ENCODE measurements at regions of chr16 and their contacts with region 1.

Region 1: DNA sequence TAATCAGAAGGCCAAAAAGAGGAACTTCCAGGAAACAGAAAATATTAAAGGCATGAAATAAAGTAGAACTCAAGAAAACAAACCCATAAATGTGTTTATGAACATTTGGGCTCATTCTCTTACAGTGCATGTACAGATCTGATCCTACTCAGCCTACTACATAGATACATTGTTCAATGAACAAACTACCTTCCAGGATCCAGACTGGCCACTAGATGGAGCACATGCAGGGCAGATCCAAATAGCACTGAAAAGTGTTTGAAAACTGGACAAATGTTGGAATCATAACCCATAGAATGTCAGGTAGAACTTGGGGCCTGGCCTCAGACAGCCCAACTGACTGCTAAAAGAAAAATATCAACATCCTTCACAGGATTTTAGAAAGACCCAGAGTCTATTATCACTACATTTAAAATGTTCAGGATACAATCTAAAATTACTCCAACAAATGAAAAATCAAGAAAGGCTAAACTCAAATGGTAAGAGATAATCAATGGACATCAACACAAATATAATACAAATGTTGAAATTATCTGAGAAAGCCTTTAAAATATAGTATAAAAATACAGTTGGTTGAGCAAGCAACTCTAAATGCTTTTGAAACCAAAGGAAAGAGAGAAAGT is 122.4 kb upstream of the NUDT7 start:
- DNase-seq: peak; percentile 27
- H3K4me3 Mint-ChIP-seq: no peak overlapping the region
- H3K27ac Mint-ChIP-seq: no peak overlapping the region
- H3K4me1 Mint-ChIP-seq: no peaks in the 10 kb centered on the region
- H3K27me3 Mint-ChIP-seq: peaks cover 12% of the 10 kb centered on the region

Region 2: DNA sequence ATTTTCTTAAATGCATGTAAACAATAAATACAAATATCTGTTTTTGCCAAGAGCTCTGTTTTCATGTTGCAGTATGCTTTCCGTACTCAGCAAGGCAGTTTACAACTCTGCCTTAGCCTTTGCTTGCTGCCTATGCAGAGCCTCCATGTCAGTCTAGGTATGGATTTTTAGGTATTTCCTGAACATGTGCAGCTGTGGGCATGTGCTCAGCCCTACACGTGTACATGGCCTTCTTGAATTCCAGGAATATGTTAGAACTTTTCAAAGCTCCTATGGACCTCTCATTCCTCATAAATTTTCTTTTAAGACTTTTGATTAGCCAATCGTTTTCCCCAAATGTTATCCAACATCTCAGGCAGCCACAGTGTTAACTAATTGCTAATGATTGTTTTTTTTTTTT is 336.9 kb before region 1 on chr16:
- CTCF ChIA-PET with region 1: no interaction called
- POLR2A ChIA-PET with region 1: interaction called, 10 read pairs
- DNase-seq: no peak
- H3K4me3 Mint-ChIP-seq: no peak overlapping the region
- H3K27ac Mint-ChIP-seq: no peak overlapping the region
- H3K4me1 Mint-ChIP-seq: no peaks in the 10 kb centered on the region
- H3K27me3 Mint-ChIP-seq: peaks cover 13% of the 10 kb centered on the region

Region 3: DNA sequence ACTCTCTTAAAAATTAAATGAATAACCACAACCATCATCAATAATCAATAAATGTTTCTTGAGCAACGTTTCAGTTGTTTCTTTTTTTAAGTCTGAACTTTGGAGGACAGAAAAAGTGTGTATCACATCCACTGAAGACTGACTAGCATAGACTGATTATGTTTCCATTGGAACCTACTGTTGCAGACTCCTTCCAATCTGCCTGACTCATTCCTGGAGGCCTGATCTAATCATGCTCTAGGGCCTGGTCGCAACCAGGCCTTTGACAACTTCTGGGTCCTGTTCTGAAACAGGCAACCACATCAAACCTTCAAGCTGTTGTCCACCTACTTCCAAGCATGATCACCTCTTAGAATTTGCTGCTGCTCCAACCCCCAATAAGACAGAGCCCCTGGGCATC is 13.2 kb after region 1 on chr16:
- CTCF ChIA-PET with region 1: no interaction called
- POLR2A ChIA-PET with region 1: no interaction called
- DNase-seq: no peak
- H3K4me3 Mint-ChIP-seq: no peak overlapping the region
- H3K27ac Mint-ChIP-seq: no peak overlapping the region
- H3K4me1 Mint-ChIP-seq: no peaks in the 10 kb centered on the region
- H3K27me3 Mint-ChIP-seq: peaks cover 1% of the 10 kb centered on the region

Region 4: GRCh38 chr16:77696149-77696548 is 96.2 kb after region 1 on chr16:
- CTCF ChIA-PET with region 1: no interaction called
- POLR2A ChIA-PET with region 1: no interaction called
- DNase-seq: no peak
- H3K4me3 Mint-ChIP-seq: no peak overlapping the region
- H3K27ac Mint-ChIP-seq: no peak overlapping the region
- H3K4me1 Mint-ChIP-seq: no peaks in the 10 kb centered on the region
- H3K27me3 Mint-ChIP-seq: peaks cover 11% of the 10 kb centered on the region